Posterior vena cava (tissue), 2 donors: ENCODE measurements at regions of chr20 and their contacts with region 1.

Region 1: DNA sequence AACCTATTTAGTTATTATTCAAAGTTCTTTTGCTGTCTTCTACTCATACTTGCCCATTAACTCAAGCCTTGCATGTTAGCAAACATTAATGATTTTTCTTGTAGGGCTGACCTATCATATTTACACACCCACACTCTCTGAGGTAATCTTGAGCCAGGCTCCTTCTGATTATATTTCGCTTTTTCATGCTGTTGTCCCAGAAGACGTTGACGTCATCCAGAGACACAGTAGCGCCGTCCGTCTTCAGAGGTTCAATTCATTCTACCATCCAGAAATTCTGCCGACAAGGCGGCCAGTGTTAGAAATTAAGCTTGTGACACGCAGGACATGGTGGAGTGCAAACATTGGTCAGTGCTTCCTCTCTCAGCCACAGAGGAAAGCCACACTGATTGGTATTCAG is 584.7 kb downstream of the BMP2 start:
- DNase-seq: no peak

Region 2: DNA sequence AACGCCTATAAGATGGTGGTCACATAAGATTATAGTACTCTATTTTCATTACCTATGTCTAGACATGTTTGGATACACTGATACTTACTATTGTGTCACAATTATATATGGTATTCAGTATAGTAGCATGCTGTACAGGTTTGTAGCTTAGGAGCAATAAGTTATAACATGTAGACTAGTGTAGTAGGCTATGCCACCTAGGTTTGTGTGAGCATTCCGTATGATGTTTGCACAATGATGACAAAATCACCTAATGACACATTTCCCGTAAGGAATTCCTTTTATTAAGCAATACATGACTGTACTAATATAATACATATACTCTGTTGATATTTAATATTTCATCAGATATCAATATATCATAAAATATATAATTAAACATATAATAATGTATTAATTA is 44.0 kb before region 1 on chr20:
- intact Hi-C with region 1: loop called in 1 of 2 experiments (anchors 2 kb)
- DNase-seq: no peak